Ascending aorta (tissue), 2 donors: ENCODE measurements at regions of chr1 and their contacts with region 1.

Region 1: GRCh38 chr1:161225534-161226319 is at the start of gene TOMM40L:
- DNase-seq: peak; percentile 79 to 96
- H3K4me3 ChIP-seq: peak within 1 kb of the TSS; percentile 84 to 94
- H3K27ac ChIP-seq: peak within 1 kb of the TSS; percentile 51 to 65
- H3K4me1 ChIP-seq: peaks cover 7 to 16% of the 10 kb centered on the region in 2 donors
- H3K27me3 ChIP-seq: no peaks in the 10 kb centered on the region
- CTCF ChIP-seq: peak in 2 of 3 experiments; percentile 27 to 36
- total RNA-seq, gene TOMM40L: 26.6 TPM

Region 2: GRCh38 chr1:161258439-161259344 is 33.0 kb after region 1 on chr1 and contains the start of gene PCP4L1:
- intact Hi-C with region 1: no loop called
- DNase-seq: no peak
- H3K4me3 ChIP-seq: peak within 1 kb of the TSS; percentile 45 to 51
- H3K27ac ChIP-seq: no peak within 1 kb of the TSS
- H3K4me1 ChIP-seq: peaks cover 0 to 5% of the 10 kb centered on the region in 2 donors
- H3K27me3 ChIP-seq: no peaks in the 10 kb centered on the region
- CTCF ChIP-seq: no peak
- total RNA-seq, gene PCP4L1: not detected

Region 3: GRCh38 chr1:161367684-161368400 is 142.1 kb after region 1 on chr1 and contains the start of gene CFAP126:
- intact Hi-C with region 1: loop called (anchors 5 kb)
- DNase-seq: peak; percentile 64 to 86
- H3K4me3 ChIP-seq: no peak within 1 kb of the TSS
- H3K27ac ChIP-seq: peak within 1 kb of the TSS; percentile 62 to 75
- H3K4me1 ChIP-seq: peaks cover 0 to 9% of the 10 kb centered on the region in 2 donors
- H3K27me3 ChIP-seq: no peaks in the 10 kb centered on the region
- CTCF ChIP-seq: peak in 1 of 3 experiments; percentile 36
- total RNA-seq, gene CFAP126: not detected

Region 4: GRCh38 chr1:161382214-161383019 is 156.7 kb after region 1 on chr1:
- intact Hi-C with region 1: loop called (anchors 1 kb)
- DNase-seq: peak in 1 of 2 donors; percentile 81
- H3K4me3 ChIP-seq: no peak overlapping the region
- H3K27ac ChIP-seq: peak overlapping the region; percentile 78
- H3K4me1 ChIP-seq: peaks cover 0 to 4% of the 10 kb centered on the region in 2 donors
- H3K27me3 ChIP-seq: no peaks in the 10 kb centered on the region
- CTCF ChIP-seq: peak; percentile 53 to 71 (median 62)